ENCODE measurements at regions of chr1 and their contacts with region 1.

Region 1: GRCh38 chr1:59083946-59084865 is 212.7 kb upstream of the FGGY start:
- DNase-seq: no peak
- ATAC-seq: no peak; the same call in 2 of the 3 replicates
- H3K4me3 ChIP-seq: no peak overlapping the region
- H3K27ac ChIP-seq: no peak overlapping the region
- H3K4me1 ChIP-seq: 0 out of 2 replicates have a peak, but pooled peaks cover 5% of the 10 kb centered on the region
- H3K27me3 ChIP-seq: no peaks in the 10 kb centered on the region
- CTCF ChIP-seq: no peak
- EP300 ChIP-seq: no peak
- POLR2A ChIP-seq: no peak
- RAD21 ChIP-seq: no peak

Region 2: DNA sequence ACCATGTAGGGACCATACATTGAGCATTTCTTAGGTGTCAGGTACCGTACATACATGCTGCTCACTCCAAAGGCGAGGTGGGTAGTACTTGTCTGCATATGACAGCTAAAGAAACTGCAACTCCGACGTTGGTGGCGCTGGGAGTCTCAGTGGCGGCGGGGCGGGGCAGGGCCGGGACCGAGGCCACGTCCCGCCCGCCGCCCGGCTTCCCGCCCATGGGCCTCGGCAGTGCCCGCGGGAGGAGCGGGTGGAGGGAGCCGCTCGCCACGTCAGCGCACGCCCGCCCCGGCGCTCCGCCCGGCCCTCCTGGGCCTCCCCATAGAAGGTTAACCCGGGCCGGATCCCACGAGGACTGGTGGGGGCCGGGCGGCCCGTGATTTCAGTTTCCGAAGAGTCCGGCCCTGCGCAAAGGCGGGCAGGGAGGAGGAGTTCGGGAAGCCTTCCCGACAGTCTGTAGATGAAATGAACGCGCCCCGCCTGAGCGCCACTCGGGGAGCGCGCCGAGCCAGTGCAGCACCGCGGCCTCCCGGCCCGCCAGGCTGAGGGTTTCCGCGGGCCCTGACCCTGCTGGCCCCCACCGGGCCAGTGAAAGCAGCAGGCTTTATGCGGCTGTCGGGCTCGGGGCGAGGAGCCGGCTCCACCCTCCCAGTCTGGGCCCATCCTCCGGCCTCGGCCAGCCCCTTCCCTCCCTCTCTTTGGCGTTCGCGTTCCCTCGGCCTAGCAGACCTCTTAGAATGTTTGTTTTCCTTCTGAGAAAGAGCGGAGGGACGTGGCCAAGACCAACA is 180.5 kb before region 1 on chr1:
- CTCF ChIA-PET with region 1: no interaction called
- POLR2A ChIA-PET with region 1: no interaction called
- RAD21 ChIA-PET with region 1: no interaction called
- SMC1A ChIA-PET with region 1: no interaction called
- in situ Hi-C with region 1: no loop called
- intact Hi-C with region 1: no loop called
- DNase-seq: peak; percentile 59
- ATAC-seq: peak; percentile 96
- H3K4me3 ChIP-seq: peak overlapping the region; percentile 58; the same call in 1 of the 2 replicates
- H3K27ac ChIP-seq: peak overlapping the region; percentile 60
- H3K4me1 ChIP-seq: peaks cover 9% of the 10 kb centered on the region; the same call in 1 of the 2 replicates
- H3K27me3 ChIP-seq: no peaks in the 10 kb centered on the region
- CTCF ChIP-seq: no peak
- EP300 ChIP-seq: no peak
- POLR2A ChIP-seq: peak; percentile 81
- RAD21 ChIP-seq: no peak

Region 3: DNA sequence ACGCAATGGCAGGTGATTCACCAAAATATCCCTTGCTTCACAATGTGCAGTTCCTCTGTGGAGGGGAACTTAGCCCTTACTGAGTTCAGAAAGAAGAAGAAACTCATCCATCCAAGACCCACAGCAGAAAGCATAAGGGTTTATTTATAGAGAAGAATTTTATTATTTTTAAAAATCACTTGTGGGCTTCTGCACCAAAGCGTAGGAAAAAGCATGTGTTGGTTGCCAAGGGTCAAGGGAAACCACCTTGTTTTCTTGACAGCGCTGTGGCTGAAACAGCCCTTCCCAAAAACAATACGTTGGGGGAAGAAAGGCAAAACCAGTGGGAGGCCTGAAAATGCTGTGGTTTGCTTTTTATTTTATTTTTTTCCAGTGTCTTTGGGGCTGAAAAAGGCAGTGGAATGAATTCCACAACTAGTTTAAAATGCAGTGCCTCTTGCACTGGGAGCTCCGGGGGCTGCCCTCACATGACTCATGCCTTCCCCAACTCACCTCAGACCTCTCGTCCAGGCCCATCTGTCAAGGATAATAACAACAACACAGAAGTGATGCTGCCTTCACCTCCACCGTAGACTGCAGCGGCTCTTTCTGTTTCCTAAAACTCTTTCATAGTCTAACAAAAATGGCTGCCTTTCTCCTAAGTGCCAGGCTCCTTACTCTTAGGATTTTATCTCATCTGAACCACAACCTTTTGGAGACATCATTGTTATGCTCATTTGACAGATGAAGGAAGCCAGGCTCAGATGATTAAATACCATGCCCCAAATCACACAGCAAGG is 76.2 kb before region 1 on chr1:
- CTCF ChIA-PET with region 1: no interaction called
- POLR2A ChIA-PET with region 1: no interaction called
- RAD21 ChIA-PET with region 1: no interaction called
- SMC1A ChIA-PET with region 1: no interaction called
- in situ Hi-C with region 1: no loop called
- intact Hi-C with region 1: no loop called
- DNase-seq: no peak
- ATAC-seq: peak; percentile 71
- H3K4me3 ChIP-seq: peak overlapping the region; percentile 9; the same call in 1 of the 2 replicates
- H3K27ac ChIP-seq: peak overlapping the region; percentile 15
- H3K4me1 ChIP-seq: peaks cover 55% of the 10 kb centered on the region
- H3K27me3 ChIP-seq: no peaks in the 10 kb centered on the region
- CTCF ChIP-seq: no peak
- EP300 ChIP-seq: peak; percentile 14 to 63; a peak in 3 of 4 replicates
- POLR2A ChIP-seq: no peak
- RAD21 ChIP-seq: no peak

Region 4: DNA sequence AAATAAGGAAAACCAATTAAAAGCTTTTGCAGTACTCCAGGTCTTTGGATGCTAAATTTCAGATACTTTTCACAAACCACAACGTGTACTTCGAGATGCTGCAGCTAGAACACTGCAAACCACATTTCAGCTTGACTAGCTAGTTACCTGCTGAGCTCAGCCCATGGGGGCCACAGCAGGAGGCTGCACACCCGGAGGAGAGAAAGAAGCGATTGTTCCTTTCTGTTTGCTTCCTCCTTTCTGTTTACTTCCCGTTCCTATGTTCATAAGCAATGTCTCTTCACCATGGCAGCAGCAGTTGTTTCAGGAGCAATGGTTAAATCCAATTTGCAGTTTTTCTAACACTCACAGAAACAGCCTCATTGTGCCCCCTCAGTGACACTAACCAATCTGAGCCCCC is 12.9 kb before region 1 on chr1:
- CTCF ChIA-PET with region 1: interaction called, 3 read pairs
- POLR2A ChIA-PET with region 1: no interaction called
- RAD21 ChIA-PET with region 1: no interaction called
- SMC1A ChIA-PET with region 1: interaction called, 12 read pairs
- in situ Hi-C with region 1: no loop called
- intact Hi-C with region 1: no loop called
- DNase-seq: no peak
- ATAC-seq: no peak
- H3K4me3 ChIP-seq: no peak overlapping the region
- H3K27ac ChIP-seq: no peak overlapping the region
- H3K4me1 ChIP-seq: peaks cover 14% of the 10 kb centered on the region
- H3K27me3 ChIP-seq: no peaks in the 10 kb centered on the region
- CTCF ChIP-seq: no peak
- EP300 ChIP-seq: no peak
- POLR2A ChIP-seq: no peak
- RAD21 ChIP-seq: no peak

Measured in GM12878 (cell line).